MCF 10A (cell line): ENCODE measurements at regions of chr7 and their contacts with region 1.

Region 1: GRCh38 chr7:131859147-131859821 is 302.9 kb upstream of the PODXL start:
- DNase-seq: peak; percentile 76
- H3K4me3 Mint-ChIP-seq: no peak overlapping the region
- H3K27ac Mint-ChIP-seq: no peak overlapping the region
- H3K4me1 Mint-ChIP-seq: peaks cover 6% of the 10 kb centered on the region
- H3K27me3 Mint-ChIP-seq: peaks cover 14% of the 10 kb centered on the region
- CTCF ChIP-seq: peak; percentile 65

Region 2: GRCh38 chr7:131836733-131837132 is 22.6 kb before region 1 on chr7:
- CTCF ChIA-PET with region 1: interaction called, 14 read pairs
- POLR2A ChIA-PET with region 1: no interaction called
- intact Hi-C with region 1: no loop called
- DNase-seq: no peak
- H3K4me3 Mint-ChIP-seq: no peak overlapping the region
- H3K27ac Mint-ChIP-seq: no peak overlapping the region
- H3K4me1 Mint-ChIP-seq: no peaks in the 10 kb centered on the region
- H3K27me3 Mint-ChIP-seq: peaks cover 9% of the 10 kb centered on the region
- CTCF ChIP-seq: no peak

Region 3: GRCh38 chr7:131869169-131869844 is 10.0 kb after region 1 on chr7:
- CTCF ChIA-PET with region 1: interaction called, 31 read pairs
- POLR2A ChIA-PET with region 1: no interaction called
- intact Hi-C with region 1: no loop called
- DNase-seq: no peak
- H3K4me3 Mint-ChIP-seq: no peak overlapping the region
- H3K27ac Mint-ChIP-seq: no peak overlapping the region
- H3K4me1 Mint-ChIP-seq: no peaks in the 10 kb centered on the region
- H3K27me3 Mint-ChIP-seq: no peaks in the 10 kb centered on the region
- CTCF ChIP-seq: no peak

Region 4: GRCh38 chr7:131945313-131945911 is 86.1 kb after region 1 on chr7:
- CTCF ChIA-PET with region 1: interaction called, 14 read pairs
- POLR2A ChIA-PET with region 1: no interaction called
- intact Hi-C with region 1: loop called (anchors 5 kb)
- DNase-seq: peak; percentile 44
- H3K4me3 Mint-ChIP-seq: no peak overlapping the region
- H3K27ac Mint-ChIP-seq: no peak overlapping the region
- H3K4me1 Mint-ChIP-seq: peaks cover 5% of the 10 kb centered on the region
- H3K27me3 Mint-ChIP-seq: peaks cover 19% of the 10 kb centered on the region
- CTCF ChIP-seq: peak; percentile 93

Region 5: DNA sequence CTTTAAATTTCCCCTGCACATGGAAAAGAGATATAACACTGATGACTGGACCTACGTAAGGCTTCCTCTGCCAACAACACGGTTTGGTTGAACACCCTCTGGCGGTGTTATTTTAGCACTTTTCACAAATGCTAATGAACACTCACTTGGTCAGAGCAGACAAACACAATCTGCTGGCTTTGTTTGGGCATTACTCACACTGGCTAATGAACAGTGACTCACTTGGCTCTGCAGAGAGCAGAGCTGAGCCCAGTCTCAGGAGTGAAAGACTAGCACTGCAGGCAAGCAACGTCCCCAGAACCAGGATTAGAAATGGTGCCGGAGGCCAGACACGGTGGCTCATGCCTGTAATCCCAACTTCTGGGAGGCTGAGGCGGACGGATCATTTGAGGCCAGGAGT is 286.2 kb after region 1 on chr7:
- CTCF ChIA-PET with region 1: interaction called, 4 read pairs
- POLR2A ChIA-PET with region 1: no interaction called
- intact Hi-C with region 1: loop called (anchors 1 kb)
- DNase-seq: peak; percentile 90
- H3K4me3 Mint-ChIP-seq: no peak overlapping the region
- H3K27ac Mint-ChIP-seq: no peak overlapping the region
- H3K4me1 Mint-ChIP-seq: peaks cover 6% of the 10 kb centered on the region
- H3K27me3 Mint-ChIP-seq: peaks cover under 1% of the 10 kb centered on the region
- CTCF ChIP-seq: peak; percentile 13

Region 6: GRCh38 chr7:132171130-132171576 is 311.9 kb after region 1 on chr7:
- CTCF ChIA-PET with region 1: no interaction called
- POLR2A ChIA-PET with region 1: no interaction called
- intact Hi-C with region 1: no loop called
- DNase-seq: no peak
- H3K4me3 Mint-ChIP-seq: no peak overlapping the region
- H3K27ac Mint-ChIP-seq: no peak overlapping the region
- H3K4me1 Mint-ChIP-seq: no peaks in the 10 kb centered on the region
- H3K27me3 Mint-ChIP-seq: no peaks in the 10 kb centered on the region
- CTCF ChIP-seq: no peak

Region 7: DNA sequence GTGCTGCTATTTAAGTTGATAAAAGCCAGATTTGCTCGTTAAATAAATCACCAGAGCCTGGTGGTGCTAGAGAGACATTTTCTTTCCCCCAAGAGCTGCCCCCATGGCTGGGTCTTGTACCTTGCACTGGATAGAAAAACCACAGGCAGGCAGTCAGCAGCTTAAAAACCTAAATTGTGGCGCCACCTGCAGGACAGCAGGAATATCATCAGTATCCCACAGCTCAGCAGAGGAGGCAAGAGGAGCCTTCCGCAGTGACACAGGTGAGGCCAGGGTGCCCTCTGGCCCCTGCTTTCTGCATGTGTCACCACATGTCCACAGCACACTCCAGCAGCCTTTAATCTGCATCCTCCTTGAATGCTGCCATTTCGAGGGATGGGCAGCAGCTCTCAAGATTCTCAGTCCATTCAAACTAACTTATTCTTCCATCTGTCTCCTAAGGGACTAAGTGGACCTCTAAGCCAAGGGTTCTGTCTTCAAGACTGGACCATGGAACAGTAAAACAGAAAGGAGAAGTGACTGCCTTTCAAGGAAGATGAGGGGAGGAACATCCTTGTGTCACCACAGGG is 721.5 kb after region 1 on chr7:
- CTCF ChIA-PET with region 1: interaction called, 17 read pairs
- POLR2A ChIA-PET with region 1: no interaction called
- intact Hi-C with region 1: loop called (anchors 5 kb)
- DNase-seq: peak; percentile 78
- H3K4me3 Mint-ChIP-seq: no peak overlapping the region
- H3K27ac Mint-ChIP-seq: no peak overlapping the region
- H3K4me1 Mint-ChIP-seq: no peaks in the 10 kb centered on the region
- H3K27me3 Mint-ChIP-seq: peaks cover 32% of the 10 kb centered on the region
- CTCF ChIP-seq: peak; percentile 64